AG04449 (cell line): ENCODE measurements at regions of chr16 and their contacts with region 1.

Region 1: GRCh38 chr16:22001591-22001990 is 675 bp upstream of the PDZD9 start:
- DNase-seq: peak; percentile 12
- H3K4me3 ChIP-seq: no peak overlapping the region
- CTCF ChIP-seq: no peak

Region 2: DNA sequence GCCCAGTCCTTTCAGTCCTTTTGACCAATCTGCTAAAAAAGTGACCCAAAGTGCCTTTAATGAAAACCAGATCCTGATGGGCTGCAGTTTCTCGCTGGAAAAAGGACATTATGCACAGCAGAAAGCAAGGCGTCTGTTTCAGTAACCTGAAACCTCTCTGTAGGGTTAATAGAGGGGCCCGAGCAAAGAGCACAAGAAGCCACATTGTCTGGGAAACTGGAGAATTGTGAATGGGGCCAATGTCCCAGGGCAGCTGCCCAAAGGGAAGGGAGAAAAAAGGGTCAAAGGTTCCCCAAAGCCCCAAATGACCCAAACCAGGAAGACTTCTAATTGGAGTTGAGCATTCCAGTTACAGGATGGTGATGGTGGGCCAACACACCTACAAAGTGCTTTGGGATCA is 334.8 kb before region 1 on chr16:
- CTCF ChIA-PET with region 1: no interaction called
- POLR2A ChIA-PET with region 1: no interaction called
- DNase-seq: no peak
- H3K4me3 ChIP-seq: no peak overlapping the region
- CTCF ChIP-seq: no peak

Region 3: DNA sequence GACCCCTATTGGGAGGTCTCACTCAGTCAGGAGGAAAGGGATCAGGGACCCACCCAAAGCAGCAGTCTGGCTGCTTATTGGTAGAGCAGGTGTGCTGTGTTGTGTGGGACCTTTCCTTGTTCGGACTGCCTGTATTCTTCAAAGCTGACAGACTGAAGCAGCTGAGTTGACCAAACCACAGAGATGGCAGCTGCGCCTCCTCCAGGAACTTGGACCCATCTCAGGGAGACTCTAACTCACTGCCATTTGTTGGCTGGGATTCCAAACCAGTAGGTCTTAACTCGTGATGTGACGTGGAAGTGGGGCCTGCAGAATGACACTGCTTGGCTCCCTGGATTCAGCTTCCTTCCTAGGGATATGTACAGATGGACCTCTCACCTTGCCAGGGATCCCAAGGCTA is 58.0 kb before region 1 on chr16:
- CTCF ChIA-PET with region 1: no interaction called
- POLR2A ChIA-PET with region 1: no interaction called
- DNase-seq: no peak
- H3K4me3 ChIP-seq: no peak overlapping the region
- CTCF ChIP-seq: no peak

Region 4: GRCh38 chr16:21989133-21989532 is 12.5 kb before region 1 on chr16:
- CTCF ChIA-PET with region 1: interaction called, 43 read pairs
- POLR2A ChIA-PET with region 1: no interaction called
- DNase-seq: peak; percentile 16
- H3K4me3 ChIP-seq: no peak overlapping the region
- CTCF ChIP-seq: no peak

Region 5: GRCh38 chr16:22014271-22014873 is 12.8 kb after region 1 on chr16:
- CTCF ChIA-PET with region 1: interaction called, 25 read pairs
- POLR2A ChIA-PET with region 1: no interaction called
- DNase-seq: no peak
- H3K4me3 ChIP-seq: no peak overlapping the region
- CTCF ChIP-seq: no peak

Region 6: GRCh38 chr16:22216191-22216831 is 214.7 kb after region 1 on chr16:
- CTCF ChIA-PET with region 1: no interaction called
- POLR2A ChIA-PET with region 1: no interaction called
- DNase-seq: no peak
- H3K4me3 ChIP-seq: no peak overlapping the region
- CTCF ChIP-seq: no peak